OCI-LY7 (cell line): ENCODE measurements at regions of chr10 and their contacts with region 1.

Region 1: GRCh38 chr10:3858041-3858845 is 73.2 kb upstream of the KLF6 start:
- DNase-seq: no peak
- H3K4me3 ChIP-seq: no peak overlapping the region
- H3K27ac ChIP-seq: no peak overlapping the region
- H3K4me1 ChIP-seq: no peaks in the 10 kb centered on the region
- CTCF ChIP-seq: no peak

Region 2: DNA sequence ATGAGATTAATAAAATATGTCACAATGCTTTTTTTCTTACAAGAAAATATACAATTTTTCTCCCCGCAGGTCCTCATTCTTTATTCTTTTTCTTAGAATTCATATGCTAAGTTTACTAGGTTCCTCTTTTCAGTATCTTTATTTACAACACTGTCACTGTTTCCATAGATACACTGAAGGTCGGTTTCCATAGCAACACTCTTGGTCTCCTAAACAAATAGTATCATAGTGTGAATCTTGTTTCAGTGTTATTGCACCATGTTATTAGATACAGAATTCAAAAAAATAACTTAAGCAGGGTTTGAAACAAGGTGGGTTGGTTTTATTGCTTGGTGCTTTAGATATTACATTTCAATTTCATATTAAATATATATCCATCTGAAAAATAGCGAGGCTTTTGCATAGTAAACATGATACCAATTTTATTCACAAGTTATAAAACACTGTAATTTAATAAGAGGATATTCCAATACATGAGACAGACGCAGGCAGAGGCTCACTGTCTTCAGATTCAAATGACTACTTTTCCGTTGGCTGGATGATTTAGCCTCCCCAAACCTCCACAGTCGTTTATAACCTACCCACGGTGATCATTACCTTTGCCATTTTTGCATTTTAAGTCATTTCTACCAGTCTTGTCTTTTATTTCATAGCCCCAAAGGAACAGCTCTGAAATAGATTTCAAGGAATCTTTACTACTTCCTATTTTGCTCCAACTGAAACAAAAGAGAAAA is 15.7 kb after region 1 on chr10:
- CTCF ChIA-PET with region 1: no interaction called
- POLR2A ChIA-PET with region 1: interaction called, 10 read pairs
- intact Hi-C with region 1: no loop called
- DNase-seq: peak; percentile 89
- H3K4me3 ChIP-seq: peak overlapping the region; percentile 14
- H3K27ac ChIP-seq: no peak overlapping the region
- H3K4me1 ChIP-seq: peaks cover 50% of the 10 kb centered on the region
- CTCF ChIP-seq: no peak